Stomach (tissue), 19 donors: ENCODE measurements at regions of chr10 and their contacts with region 1.

Region 1: GRCh38 chr10:9209105-9209798 is 1154.8 kb downstream of the GATA3 start:
- DNase-seq: peak; percentile 66 to 82
- H3K4me3 ChIP-seq: no peak overlapping the region
- H3K27ac ChIP-seq: no peak overlapping the region
- H3K4me1 ChIP-seq: peaks cover 0 to 6% (median 3%) of the 10 kb centered on the region in 4 donors
- H3K27me3 ChIP-seq: peaks cover 0 to 6% (median 0%) of the 10 kb centered on the region in 3 donors
- CTCF ChIP-seq: peak in 5 of 7 experiments; percentile 73 to 89 (median 87)
- EP300 ChIP-seq: no peak
- POLR2A ChIP-seq: no peak

Region 2: GRCh38 chr10:7866176-7866575 is 1343.1 kb before region 1 on chr10:
- intact Hi-C with region 1: loop called (anchors 10 kb)
- DNase-seq: no peak
- H3K4me3 ChIP-seq: no peak overlapping the region
- H3K27ac ChIP-seq: no peak overlapping the region
- H3K4me1 ChIP-seq: no peaks in the 10 kb centered on the region
- H3K27me3 ChIP-seq: no peaks in the 10 kb centered on the region
- CTCF ChIP-seq: no peak
- EP300 ChIP-seq: no peak
- POLR2A ChIP-seq: no peak